ENCODE measurements at regions of chr13 and their contacts with region 1.

Region 1: DNA sequence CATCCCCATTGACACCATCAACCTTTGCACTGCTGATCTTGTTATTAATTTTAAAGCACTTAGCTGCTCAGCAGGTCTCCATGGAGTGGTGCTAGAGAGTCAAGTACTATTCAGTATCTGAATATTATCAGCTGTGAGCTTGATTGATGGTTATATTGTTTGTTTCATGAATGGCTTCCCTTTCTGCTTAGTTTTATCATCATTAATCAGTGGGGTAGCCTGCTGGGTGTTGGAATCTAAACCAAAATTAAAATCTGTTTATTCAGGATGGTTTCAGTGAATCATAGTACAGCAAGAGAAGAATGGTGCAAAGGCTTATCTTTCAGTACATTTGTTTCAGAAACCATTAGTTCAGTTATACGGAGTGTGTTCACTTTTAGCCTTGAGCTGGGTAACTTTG is 42.5 kb upstream of the SCEL start:
- DNase-seq: no peak
- ATAC-seq: peak in 1 of 4 donors; percentile 49
- H3K4me3 ChIP-seq: no peak overlapping the region
- H3K27ac ChIP-seq: no peak overlapping the region
- H3K4me1 ChIP-seq: peaks cover 0 to 6% (median 0%) of the 10 kb centered on the region in 12 donors
- H3K27me3 ChIP-seq: no peaks in the 10 kb centered on the region
- CTCF ChIP-seq: peak in 10 of 12 donors; percentile 26 to 54 (median 43)
- POLR2A ChIP-seq: no peak

Region 2: DNA sequence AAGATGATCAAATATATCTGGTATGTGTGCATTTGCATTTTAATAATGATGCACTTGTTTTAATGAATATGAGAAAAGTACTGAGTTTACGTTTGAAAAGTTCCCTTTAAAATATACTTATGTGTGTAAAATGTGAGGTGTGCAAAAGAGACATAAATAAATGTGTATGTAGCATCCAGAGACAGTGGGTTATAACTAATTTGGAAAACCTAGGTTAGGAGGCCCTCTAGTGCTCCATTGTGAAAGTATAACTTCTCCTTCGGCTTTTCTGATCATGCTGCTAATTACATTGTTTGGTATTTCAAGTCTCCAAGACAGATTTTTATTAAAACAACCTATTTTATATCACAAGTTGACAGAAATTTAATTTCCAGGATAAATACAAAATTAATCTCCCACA is 72.7 kb after region 1 on chr13:
- intact Hi-C with region 1: loop called in 8 of 10 experiments (anchors 2 to 10 kb)
- DNase-seq: no peak
- ATAC-seq: no peak
- H3K4me3 ChIP-seq: no peak overlapping the region
- H3K27ac ChIP-seq: no peak overlapping the region
- H3K4me1 ChIP-seq: no peaks in the 10 kb centered on the region
- H3K27me3 ChIP-seq: peaks cover 0 to 4% (median 0%) of the 10 kb centered on the region in 9 donors
- CTCF ChIP-seq: peak in 11 of 12 donors; percentile 13 to 62 (median 47)
- POLR2A ChIP-seq: no peak

Measured in heart left ventricle (tissue), 16 donors.